Heart right ventricle (tissue), 16 donors: ENCODE measurements at regions of chr7 and their contacts with region 1.

Region 1: DNA sequence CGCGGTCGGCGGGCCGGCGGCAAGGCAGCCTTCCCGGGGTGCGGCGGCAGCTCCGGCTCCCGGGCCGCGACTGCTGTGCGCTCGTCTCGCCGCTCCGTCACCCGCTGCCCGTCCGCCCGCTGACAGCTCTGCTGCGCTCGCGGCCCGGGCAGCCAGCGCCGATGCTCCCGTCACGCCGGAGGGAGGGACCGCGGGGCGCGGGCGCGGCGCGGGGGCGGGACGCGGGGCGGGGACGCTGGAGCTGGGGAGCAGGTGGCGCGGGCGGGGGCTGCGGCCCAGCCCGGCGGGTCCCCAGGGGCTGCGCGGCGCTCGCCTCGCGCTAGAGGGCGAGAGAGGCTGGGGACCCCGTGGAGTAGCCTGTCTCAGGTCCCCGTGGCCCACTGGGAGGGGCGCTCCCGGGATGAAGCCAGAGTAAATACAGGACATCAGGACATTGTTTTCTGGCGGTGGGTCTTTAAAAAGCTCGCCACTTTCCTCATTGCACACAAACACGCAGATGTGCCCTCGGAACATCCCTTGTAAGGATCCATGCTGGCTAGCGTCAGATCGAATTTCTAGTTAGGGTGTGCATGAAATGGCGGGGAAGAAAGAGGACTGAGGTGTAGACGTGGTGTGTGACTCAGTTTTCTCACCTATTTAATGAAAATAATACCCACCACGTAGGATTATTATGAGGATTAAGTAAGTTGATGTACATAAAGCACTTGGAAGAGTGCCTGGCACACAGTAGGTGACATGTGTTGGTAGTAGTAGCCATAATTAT is at the start of gene ELAPOR2:
- DNase-seq: peak; percentile 76 to 84
- ATAC-seq: peak; percentile 96 to 99 (median 98)
- H3K4me3 ChIP-seq: peak within 1 kb of the TSS; percentile 41 to 83 (median 68)
- H3K27ac ChIP-seq: peak within 1 kb of the TSS in 8 of 10 donors; percentile 23 to 69 (median 60)
- H3K4me1 ChIP-seq: peaks cover 4 to 45% (median 16%) of the 10 kb centered on the region in 9 donors
- H3K27me3 ChIP-seq: peaks cover 0 to 21% (median 0%) of the 10 kb centered on the region in 7 donors
- CTCF ChIP-seq: peak; percentile 22 to 73 (median 49)
- total RNA-seq, gene ELAPOR2: 2.5 to 7.5 (median 4.7) TPM

Region 2: GRCh38 chr7:86939197-86939814 is 120.4 kb before region 1 on chr7:
- intact Hi-C with region 1: loop called in 5 of 10 experiments (anchors 5 to 10 kb)
- DNase-seq: peak in 1 of 2 donors; percentile 66
- ATAC-seq: peak in 6 of 8 donors; percentile 43 to 73 (median 55)
- H3K4me3 ChIP-seq: no peak overlapping the region
- H3K27ac ChIP-seq: no peak overlapping the region
- H3K4me1 ChIP-seq: no peaks in the 10 kb centered on the region
- H3K27me3 ChIP-seq: no peaks in the 10 kb centered on the region
- CTCF ChIP-seq: peak; percentile 35 to 80 (median 73)

Region 3: DNA sequence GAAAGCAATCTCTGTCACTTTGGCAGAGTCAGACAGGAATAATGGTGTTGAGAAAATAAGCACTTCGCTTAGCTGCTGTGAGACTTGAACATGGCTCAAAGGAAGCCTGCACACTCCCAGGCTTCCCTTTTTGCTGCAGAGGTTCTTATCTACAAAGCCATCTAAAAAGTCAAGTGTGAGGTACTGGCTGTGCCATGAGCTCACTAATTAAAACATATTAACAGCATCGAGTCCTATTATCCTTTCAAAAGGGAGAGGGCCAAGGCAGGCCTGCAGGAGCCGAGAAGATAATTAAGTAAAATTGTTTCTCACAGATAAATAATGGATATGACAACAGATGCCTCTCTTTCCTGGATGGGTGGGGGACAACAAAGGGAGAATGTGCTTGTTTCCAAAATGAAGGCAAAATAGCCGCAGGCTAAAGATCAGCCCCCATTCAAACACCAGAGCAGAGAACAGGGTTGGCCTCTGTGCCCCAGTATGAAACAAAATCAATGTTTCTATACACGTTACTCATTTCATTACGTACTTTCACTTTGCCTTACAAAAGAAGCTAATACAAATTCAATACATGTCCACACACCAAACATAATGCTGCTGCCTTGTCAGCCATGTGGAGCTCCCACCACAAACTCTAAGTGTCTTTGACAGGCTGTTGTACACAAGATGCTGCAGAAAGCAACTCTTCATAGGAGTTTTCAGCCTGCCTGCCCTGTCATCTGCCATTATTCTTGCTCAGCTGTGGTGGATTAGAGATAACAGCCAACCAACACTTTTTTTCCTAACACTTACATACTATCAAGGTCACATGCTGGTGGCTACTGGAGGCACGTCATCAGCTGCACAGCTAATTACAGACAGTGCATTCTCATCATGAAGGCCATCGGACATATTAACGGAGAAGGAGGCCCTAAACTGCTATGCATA is 55.6 kb before region 1 on chr7:
- intact Hi-C with region 1: loop called in 1 of 10 experiments (anchors 10 kb)
- DNase-seq: no peak
- ATAC-seq: peak in 4 of 8 donors; percentile 33 to 69 (median 55)
- H3K4me3 ChIP-seq: peak overlapping the region in 3 of 10 donors; percentile 4 to 21 (median 8)
- H3K27ac ChIP-seq: peak overlapping the region in 2 of 10 donors; percentile 11 to 47
- H3K4me1 ChIP-seq: peaks cover 0 to 38% (median 20%) of the 10 kb centered on the region in 9 donors
- H3K27me3 ChIP-seq: no peaks in the 10 kb centered on the region
- CTCF ChIP-seq: no peak

Region 4: GRCh38 chr7:87219545-87220025 is 159.9 kb after region 1 on chr7 and contains the start of gene TMEM243:
- intact Hi-C with region 1: loop called in 3 of 10 experiments (anchors 10 kb)
- DNase-seq: peak; percentile 79 to 80
- ATAC-seq: peak; percentile 90 to 94 (median 92)
- H3K4me3 ChIP-seq: peak within 1 kb of the TSS; percentile 53 to 93 (median 82)
- H3K27ac ChIP-seq: peak within 1 kb of the TSS; percentile 37 to 92 (median 86)
- H3K4me1 ChIP-seq: peaks cover 0 to 49% (median 22%) of the 10 kb centered on the region in 9 donors
- H3K27me3 ChIP-seq: peaks cover 0 to 33% (median 4%) of the 10 kb centered on the region in 7 donors
- CTCF ChIP-seq: peak in 4 of 9 donors; percentile 22 to 37 (median 33)
- total RNA-seq, gene TMEM243: 2.1 to 7.0 (median 3.9) TPM

Region 5: DNA sequence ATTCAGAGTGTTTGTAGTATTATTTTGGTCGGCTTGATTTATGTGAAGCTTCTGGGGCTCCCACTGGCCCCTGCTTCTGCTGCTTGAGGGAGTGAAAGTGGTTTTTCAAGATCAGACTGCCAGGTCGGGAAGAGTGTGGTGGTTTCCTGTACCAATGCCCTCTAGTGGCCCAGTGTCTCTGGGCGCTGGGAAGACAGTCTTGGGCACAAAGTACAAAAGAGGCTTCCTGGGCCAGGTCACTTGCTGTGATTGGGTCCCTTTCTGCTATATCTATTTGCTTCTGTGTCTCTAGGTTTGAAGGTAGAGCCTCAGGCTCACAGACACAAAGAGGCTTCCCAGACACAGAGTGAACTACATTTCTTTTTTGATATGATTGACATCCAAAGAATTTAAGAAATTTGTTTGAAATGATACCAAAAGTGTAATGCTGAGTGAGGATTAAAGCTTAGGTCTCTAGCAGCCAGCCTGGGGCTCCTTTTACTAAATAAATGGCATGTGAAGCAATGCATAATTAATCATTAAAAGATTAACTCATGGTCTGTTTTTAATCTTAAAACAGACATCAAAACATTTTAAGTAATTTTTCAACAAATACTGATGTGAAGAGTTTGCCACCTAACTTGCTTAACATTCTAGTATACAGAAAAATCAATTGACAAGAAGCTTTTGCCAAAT is 504.7 kb after region 1 on chr7:
- intact Hi-C with region 1: no loop called
- DNase-seq: no peak
- ATAC-seq: no peak
- H3K4me3 ChIP-seq: no peak overlapping the region
- H3K27ac ChIP-seq: no peak overlapping the region
- H3K4me1 ChIP-seq: no peaks in the 10 kb centered on the region
- H3K27me3 ChIP-seq: peaks cover 0 to 2% (median 0%) of the 10 kb centered on the region in 7 donors
- CTCF ChIP-seq: peak in 4 of 9 donors; percentile 13 to 39 (median 28)